Astrocyte of the cerebellum (primary cell): ENCODE measurements at regions of chr1 and their contacts with region 1.

Region 1: DNA sequence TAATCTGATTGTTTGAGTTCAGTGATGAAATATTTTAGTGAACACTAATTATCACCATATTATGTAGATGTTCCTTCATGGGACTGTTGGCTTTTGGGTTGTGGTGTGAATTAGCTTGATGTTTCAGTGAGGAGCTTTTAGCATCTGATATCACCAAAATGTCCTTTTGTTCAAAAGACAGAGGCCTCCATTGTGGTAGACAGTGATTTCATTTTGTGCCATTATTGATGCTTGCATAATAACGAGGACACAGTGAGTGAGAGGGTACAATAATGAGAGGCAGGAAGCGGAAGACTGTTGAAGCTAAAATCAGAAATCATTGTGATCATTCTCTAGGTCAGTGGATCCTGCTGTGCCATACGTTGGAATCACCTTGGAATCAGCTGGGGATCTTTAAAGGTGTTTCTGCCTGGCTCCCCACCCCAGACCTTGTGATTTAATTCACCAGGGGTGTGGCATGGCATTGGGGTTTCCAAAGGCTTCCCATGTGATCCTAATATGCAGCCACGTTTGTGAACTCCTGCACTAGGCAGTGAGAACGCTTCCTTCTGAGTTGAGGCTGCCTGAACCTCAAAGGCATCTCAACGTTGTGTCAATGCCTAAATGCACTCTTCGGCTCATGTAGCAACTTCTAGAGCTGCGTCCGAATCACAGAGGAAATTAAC is 82.1 kb upstream of the KIF1B start:
- DNase-seq: no peak
- H3K4me3 ChIP-seq: no peak overlapping the region
- CTCF ChIP-seq: no peak

Region 2: GRCh38 chr1:10178597-10179405 is 50.6 kb after region 1 on chr1:
- in situ Hi-C with region 1: loop called (anchors 5 kb)
- DNase-seq: no peak
- H3K4me3 ChIP-seq: no peak overlapping the region
- CTCF ChIP-seq: no peak

Region 3: GRCh38 chr1:10196976-10197375 is 68.7 kb after region 1 on chr1:
- in situ Hi-C with region 1: no loop called
- DNase-seq: peak; percentile 86
- H3K4me3 ChIP-seq: no peak overlapping the region
- CTCF ChIP-seq: no peak